ENCODE measurements at regions of chr20 and their contacts with region 1.

Region 1: GRCh38 chr20:61874501-61875026 is 191.1 kb downstream of the TAF4 start:
- DNase-seq: peak; percentile 67
- H3K4me3 ChIP-seq: no peak overlapping the region
- H3K27ac ChIP-seq: no peak overlapping the region
- H3K4me1 ChIP-seq: peaks cover 5% of the 10 kb centered on the region
- H3K27me3 ChIP-seq: no peaks in the 10 kb centered on the region
- CTCF ChIP-seq: peak; percentile 50 to 88

Region 2: DNA sequence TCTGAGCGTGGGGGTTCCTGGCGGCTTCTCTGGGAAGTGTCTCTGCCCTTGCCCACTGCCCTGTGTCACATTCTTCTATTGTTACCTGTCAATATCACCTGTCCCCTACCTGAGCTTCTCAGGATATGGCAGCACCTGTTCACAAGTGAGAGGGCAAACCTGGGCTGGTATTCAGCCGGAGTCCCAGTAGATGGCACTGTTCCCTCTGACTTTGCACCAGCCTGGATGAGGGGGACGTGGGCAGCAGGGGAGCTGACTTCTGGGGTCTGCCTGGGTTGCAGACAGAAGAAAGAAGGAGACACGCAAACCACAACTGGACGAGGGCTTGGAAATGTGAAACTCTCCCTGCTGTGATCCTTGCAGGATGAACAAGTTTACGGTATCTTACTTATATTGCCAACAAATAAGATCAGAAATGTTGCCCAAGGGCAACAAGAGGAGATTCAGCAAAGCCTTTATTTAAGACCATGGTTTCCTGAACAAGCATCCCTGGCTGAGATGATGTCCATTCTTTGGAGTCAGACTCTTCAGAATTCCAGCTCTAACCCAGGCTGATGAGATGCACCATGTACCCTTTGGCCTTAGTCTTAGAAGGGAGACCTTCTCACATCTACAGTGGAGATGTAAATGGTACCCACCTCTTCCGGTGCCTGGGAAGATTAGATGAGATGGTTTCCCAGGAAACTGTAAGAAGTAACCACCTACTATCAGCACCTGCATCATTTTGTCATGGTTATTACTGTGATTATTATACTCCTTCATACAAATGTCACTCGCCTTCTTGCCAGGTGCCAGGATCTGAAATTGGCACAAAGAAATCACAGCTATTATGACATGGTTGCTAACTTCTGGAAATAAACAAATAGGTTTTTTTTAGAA is 1022.5 kb before region 1 on chr20:
- CTCF ChIA-PET with region 1: no interaction called
- dilution Hi-C with region 1: no loop called
- in situ Hi-C with region 1: no loop called
- intact Hi-C with region 1: loop called (anchors 10 kb)
- DNase-seq: no peak
- H3K4me3 ChIP-seq: no peak overlapping the region
- H3K27ac ChIP-seq: no peak overlapping the region
- H3K4me1 ChIP-seq: no peaks in the 10 kb centered on the region
- H3K27me3 ChIP-seq: no peaks in the 10 kb centered on the region
- CTCF ChIP-seq: peak; percentile 69 to 84

Region 3: DNA sequence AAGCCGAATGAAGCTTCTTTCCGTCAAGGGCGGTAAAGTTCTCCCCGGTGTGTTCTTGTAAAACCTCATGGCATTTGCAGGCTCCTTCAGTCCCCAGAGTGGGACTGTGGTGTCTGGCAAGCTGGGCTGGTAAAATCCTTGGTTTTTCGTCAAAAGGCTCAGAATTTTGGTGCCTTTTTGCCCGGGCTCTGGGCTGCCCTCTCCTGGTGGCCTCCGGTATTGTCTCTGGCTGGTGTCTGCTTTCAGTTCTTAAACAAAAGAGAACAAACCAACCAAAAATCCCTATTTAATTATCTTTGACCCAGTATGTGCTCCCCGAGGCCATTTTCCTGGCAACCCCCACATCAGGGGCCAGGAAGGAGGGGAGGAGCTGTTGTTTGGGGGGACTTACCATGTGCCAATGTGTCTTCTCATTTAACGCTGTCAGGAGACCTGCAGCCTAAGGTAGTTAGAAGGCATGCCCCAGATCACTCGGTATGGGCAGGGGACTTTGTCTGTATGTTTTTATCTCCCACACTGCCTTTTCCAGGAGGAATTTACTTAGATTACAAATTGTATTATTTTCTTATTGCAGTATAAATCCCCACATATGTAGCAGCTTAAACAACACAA is 611.4 kb before region 1 on chr20:
- CTCF ChIA-PET with region 1: no interaction called
- dilution Hi-C with region 1: no loop called
- in situ Hi-C with region 1: no loop called
- intact Hi-C with region 1: loop called (anchors 10 kb)
- DNase-seq: no peak
- H3K4me3 ChIP-seq: no peak overlapping the region
- H3K27ac ChIP-seq: no peak overlapping the region
- H3K4me1 ChIP-seq: no peaks in the 10 kb centered on the region
- H3K27me3 ChIP-seq: no peaks in the 10 kb centered on the region
- CTCF ChIP-seq: peak; percentile 92 to 97

Region 4: GRCh38 chr20:61345671-61346070 is 528.9 kb before region 1 on chr20:
- CTCF ChIA-PET with region 1: no interaction called
- dilution Hi-C with region 1: no loop called
- in situ Hi-C with region 1: no loop called
- intact Hi-C with region 1: no loop called
- DNase-seq: no peak
- H3K4me3 ChIP-seq: no peak overlapping the region
- H3K27ac ChIP-seq: no peak overlapping the region
- H3K4me1 ChIP-seq: no peaks in the 10 kb centered on the region
- H3K27me3 ChIP-seq: no peaks in the 10 kb centered on the region
- CTCF ChIP-seq: no peak

Region 5: GRCh38 chr20:61808447-61808846 is 66.1 kb before region 1 on chr20:
- CTCF ChIA-PET with region 1: no interaction called
- dilution Hi-C with region 1: no loop called
- in situ Hi-C with region 1: no loop called
- intact Hi-C with region 1: no loop called
- DNase-seq: no peak
- H3K4me3 ChIP-seq: no peak overlapping the region
- H3K27ac ChIP-seq: no peak overlapping the region
- H3K4me1 ChIP-seq: peaks cover 11% of the 10 kb centered on the region
- H3K27me3 ChIP-seq: no peaks in the 10 kb centered on the region
- CTCF ChIP-seq: no peak

Region 6: DNA sequence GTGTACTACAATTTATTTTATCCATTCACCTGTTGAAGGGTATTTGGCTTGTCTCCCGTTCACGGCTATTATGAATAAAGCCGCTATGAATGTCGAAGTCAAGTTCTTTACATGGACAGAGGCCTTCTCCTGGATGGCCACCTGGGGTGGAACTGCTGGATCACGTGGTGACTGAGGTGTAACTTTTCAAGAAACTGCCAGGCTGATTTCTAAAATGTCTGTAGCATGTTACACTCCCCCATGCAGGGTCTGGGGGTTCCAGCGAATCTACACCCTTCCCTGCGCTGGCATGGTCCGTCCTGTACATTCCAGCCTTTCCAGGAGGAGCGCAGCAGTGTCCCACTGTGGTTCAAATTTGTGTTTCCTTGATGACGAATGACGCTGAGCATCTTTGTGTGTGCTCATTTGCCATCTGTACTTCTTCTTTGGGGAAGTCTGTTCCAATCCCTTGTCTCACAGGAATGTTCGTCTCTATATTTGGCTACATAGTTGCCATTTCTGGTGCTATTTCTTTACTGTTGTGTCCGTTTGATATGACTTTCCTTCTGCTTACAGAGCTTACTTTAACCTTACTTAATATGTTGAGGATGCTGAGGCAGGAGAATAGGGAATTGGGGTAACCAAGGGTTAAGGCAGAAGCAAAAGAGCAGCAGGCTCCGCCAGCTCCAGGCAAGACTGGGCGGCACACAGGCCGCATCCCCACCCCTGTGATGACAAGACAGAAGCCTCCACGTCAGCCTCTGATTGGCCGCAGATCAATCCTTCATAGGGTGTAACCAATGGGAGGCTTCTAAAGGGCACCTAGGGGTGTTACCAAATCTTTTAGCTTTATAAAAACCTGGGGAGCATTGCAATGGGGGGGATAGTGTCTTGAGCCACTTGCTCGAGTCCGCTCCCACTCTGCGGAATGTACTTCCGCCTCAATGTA is 84.5 kb after region 1 on chr20:
- CTCF ChIA-PET with region 1: no interaction called
- dilution Hi-C with region 1: no loop called
- in situ Hi-C with region 1: no loop called
- intact Hi-C with region 1: no loop called
- DNase-seq: peak; percentile 10
- H3K4me3 ChIP-seq: no peak overlapping the region
- H3K27ac ChIP-seq: no peak overlapping the region
- H3K4me1 ChIP-seq: no peaks in the 10 kb centered on the region
- H3K27me3 ChIP-seq: no peaks in the 10 kb centered on the region
- CTCF ChIP-seq: no peak